ENCODE measurements at regions of chr6 and their contacts with region 1.

Region 1: DNA sequence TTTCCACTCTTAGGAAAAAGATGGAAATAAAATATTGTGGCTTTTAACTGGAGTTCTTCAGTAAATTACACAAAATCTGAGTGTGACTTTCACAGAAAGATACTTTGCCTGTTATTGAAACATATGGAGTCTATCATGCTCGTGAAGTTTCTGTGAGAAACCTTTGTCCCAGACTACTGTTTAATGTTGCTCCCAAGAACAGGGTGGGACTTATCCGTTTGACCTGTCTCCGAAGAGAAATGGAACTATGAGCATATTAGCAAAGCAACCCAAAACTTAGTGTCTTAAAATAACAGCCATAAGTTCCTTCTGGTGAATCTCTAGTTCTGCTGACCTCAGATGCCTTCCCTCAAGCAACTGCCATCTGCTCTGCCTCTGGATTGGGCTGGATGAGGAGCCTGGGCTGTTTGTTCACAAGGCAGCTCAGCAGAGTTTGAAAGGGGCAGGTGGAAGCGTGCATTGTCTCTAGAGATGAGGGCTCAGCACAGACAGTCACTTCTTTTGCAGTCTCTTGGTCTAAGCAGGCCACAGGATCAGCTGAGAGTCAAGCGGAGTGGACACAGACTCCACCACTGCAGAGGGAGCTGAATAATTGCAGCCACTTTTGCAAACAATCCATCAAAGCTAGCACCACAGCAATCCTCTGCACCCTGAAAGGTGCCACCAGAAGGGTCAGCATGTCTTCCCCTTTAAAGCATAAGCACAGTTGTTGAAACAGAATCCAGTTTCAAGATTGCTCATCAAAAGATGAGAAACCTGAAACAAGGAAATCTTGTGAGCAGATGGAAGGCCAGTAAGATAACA is 52.8 kb downstream of the MYB start:
- DNase-seq: no peak
- H3K4me3 Mint-ChIP-seq: no peak overlapping the region
- H3K27ac Mint-ChIP-seq: peak overlapping the region; percentile 28
- H3K4me1 Mint-ChIP-seq: peaks cover 36% of the 10 kb centered on the region
- H3K27me3 Mint-ChIP-seq: no peaks in the 10 kb centered on the region

Region 2: DNA sequence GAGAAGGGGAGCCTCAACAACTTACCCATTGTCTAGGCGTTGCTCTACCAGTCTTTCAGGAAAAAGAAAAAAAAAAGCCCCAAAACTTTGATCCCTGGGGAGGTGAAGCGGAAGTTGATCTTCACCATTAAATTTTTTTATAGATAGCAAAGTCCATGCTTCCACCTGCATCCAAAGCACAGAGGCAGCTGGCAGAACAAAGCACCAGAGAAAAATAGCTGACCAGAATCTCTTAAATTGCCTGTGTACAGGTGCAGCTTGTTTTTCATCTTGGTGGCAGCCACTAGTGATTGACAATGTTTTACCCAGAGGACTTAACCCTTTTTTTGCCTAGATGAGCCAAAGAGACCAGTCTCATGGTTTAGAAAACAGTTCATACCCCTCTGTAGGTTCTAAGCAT is 33.2 kb after region 1 on chr6:
- intact Hi-C with region 1: loop called (anchors 5 kb)
- DNase-seq: no peak
- H3K4me3 Mint-ChIP-seq: no peak overlapping the region
- H3K27ac Mint-ChIP-seq: no peak overlapping the region
- H3K4me1 Mint-ChIP-seq: peaks cover 8% of the 10 kb centered on the region
- H3K27me3 Mint-ChIP-seq: no peaks in the 10 kb centered on the region